Activated CD4-positive, alpha-beta memory T cell treated with anti-CD3 and anti-CD28 coated beads for 36 hours (primary cell): ENCODE measurements at regions of chr15 and their contacts with region 1.

Region 1: GRCh38 chr15:31365655-31366127 is 39.1 kb downstream of the KLF13 start:
- DNase-seq: peak; percentile 89
- H3K4me3 Mint-ChIP-seq: peak overlapping the region; percentile 61
- H3K27ac Mint-ChIP-seq: peak overlapping the region; percentile 97
- H3K4me1 Mint-ChIP-seq: peaks cover 99% of the 10 kb centered on the region
- H3K27me3 Mint-ChIP-seq: no peaks in the 10 kb centered on the region

Region 2: DNA sequence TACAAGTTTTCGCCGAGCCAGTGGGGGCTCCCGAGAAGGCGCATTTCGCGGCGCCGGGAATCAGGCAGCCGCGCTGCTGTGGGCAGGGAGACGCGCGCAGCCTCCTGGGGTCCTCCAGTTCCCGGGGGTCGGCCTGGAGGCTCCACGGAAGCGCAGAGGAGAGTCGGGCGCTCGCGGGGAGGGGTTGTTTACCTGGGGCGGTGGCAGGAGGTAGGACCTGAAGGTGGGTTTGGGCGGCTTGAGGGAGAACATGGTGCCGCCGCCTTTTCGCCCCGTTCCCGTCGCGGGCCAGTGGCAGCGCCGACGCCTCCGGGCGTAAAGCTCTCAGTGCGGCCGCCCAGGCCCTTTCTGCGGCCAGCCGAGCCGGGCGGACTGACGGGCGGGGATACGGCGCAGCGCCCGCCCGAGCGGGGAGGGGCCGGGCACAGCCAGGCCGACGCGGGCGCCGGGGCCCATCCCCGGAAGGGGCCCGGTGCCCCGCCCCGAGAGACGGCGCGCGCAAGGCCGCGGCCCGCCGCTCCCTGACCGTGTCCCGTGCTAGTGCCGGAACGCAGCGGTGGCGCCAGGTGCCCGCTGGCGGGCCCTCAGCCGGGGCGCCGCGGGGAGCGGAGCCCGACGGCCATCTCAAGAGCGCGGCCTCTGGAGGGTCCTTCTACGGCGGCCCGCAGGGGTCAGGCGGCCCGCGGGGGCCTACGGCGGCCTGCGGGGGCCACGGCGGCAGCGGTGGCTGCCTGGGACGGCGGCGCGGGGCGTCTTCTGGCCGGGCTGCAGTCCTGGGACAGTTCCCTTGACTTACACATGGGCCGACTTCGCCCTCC is 374.2 kb before region 1 on chr15 and contains the start of gene MTMR10:
- CTCF ChIA-PET with region 1: no interaction called
- POLR2A ChIA-PET with region 1: no interaction called
- intact Hi-C with region 1: loop called (anchors 10 kb)
- DNase-seq: peak; percentile 76
- H3K4me3 Mint-ChIP-seq: peak within 1 kb of the TSS; percentile 87
- H3K27ac Mint-ChIP-seq: peak within 1 kb of the TSS; percentile 72
- H3K4me1 Mint-ChIP-seq: peaks cover 26% of the 10 kb centered on the region
- H3K27me3 Mint-ChIP-seq: no peaks in the 10 kb centered on the region
- total RNA-seq, gene MTMR10: 10.8 to 12.5 TPM

Region 3: GRCh38 chr15:31326156-31326732 is 39.4 kb before region 1 on chr15:
- CTCF ChIA-PET with region 1: interaction called, 9 read pairs
- POLR2A ChIA-PET with region 1: interaction called, 19 read pairs
- intact Hi-C with region 1: loop called (anchors 1 kb)
- DNase-seq: peak; percentile 100
- H3K4me3 Mint-ChIP-seq: peak overlapping the region; percentile 88
- H3K27ac Mint-ChIP-seq: peak overlapping the region; percentile 80
- H3K4me1 Mint-ChIP-seq: peaks cover 32% of the 10 kb centered on the region
- H3K27me3 Mint-ChIP-seq: no peaks in the 10 kb centered on the region

Region 4: DNA sequence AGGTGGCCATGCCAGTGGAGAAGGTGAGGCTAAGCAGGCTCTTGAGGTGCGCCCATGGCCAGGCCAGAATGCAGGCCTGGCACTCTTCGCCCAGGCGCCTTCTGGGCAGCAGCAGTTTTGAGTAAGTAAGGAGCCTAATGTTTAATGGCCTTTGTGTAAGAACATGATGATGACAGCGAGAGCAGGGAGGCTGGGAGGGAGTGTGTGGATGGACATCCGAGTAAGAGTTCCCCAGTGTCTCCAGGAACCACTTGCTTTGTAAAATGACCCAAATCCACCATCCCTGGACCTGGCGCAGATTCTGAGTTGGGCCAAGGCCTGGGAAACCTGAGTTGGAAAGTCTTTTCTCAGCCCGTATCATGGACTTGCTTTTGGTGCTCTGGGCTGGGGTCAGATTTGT is 14.9 kb before region 1 on chr15:
- CTCF ChIA-PET with region 1: interaction called, 20 read pairs
- POLR2A ChIA-PET with region 1: interaction called, 97 read pairs
- intact Hi-C with region 1: loop called (anchors 1 kb)
- DNase-seq: no peak
- H3K4me3 Mint-ChIP-seq: peak overlapping the region; percentile 57
- H3K27ac Mint-ChIP-seq: peak overlapping the region; percentile 94
- H3K4me1 Mint-ChIP-seq: peaks cover 99% of the 10 kb centered on the region
- H3K27me3 Mint-ChIP-seq: no peaks in the 10 kb centered on the region

Region 5: GRCh38 chr15:31442203-31443111 is 76.8 kb after region 1 on chr15:
- CTCF ChIA-PET with region 1: interaction called, 16 read pairs
- POLR2A ChIA-PET with region 1: interaction called, 15 read pairs
- intact Hi-C with region 1: no loop called
- DNase-seq: peak; percentile 41
- H3K4me3 Mint-ChIP-seq: peak overlapping the region; percentile 72
- H3K27ac Mint-ChIP-seq: peak overlapping the region; percentile 43
- H3K4me1 Mint-ChIP-seq: peaks cover 53% of the 10 kb centered on the region
- H3K27me3 Mint-ChIP-seq: no peaks in the 10 kb centered on the region